Esophagus muscularis mucosa (tissue), 4 donors: ENCODE measurements at regions of chr2 and their contacts with region 1.

Region 1: GRCh38 chr2:215917953-215918620 is 95.3 kb downstream of the MREG start:
- DNase-seq: no peak
- H3K4me3 ChIP-seq: no peak overlapping the region
- H3K27ac ChIP-seq: peak overlapping the region; percentile 36 to 61 (median 57)
- H3K4me1 ChIP-seq: peaks cover 5 to 32% (median 28%) of the 10 kb centered on the region in 4 donors
- H3K27me3 ChIP-seq: no peaks in the 10 kb centered on the region
- CTCF ChIP-seq: no peak
- EP300 ChIP-seq: no peak
- POLR2A ChIP-seq: no peak

Region 2: GRCh38 chr2:215454519-215455246 is 463.4 kb before region 1 on chr2:
- intact Hi-C with region 1: loop called (anchors 5 kb)
- DNase-seq: no peak
- H3K4me3 ChIP-seq: no peak overlapping the region
- H3K27ac ChIP-seq: no peak overlapping the region
- H3K4me1 ChIP-seq: peaks cover 0 to 10% (median 3%) of the 10 kb centered on the region in 4 donors
- H3K27me3 ChIP-seq: no peaks in the 10 kb centered on the region
- CTCF ChIP-seq: peak; percentile 70 to 81 (median 77)
- EP300 ChIP-seq: no peak
- POLR2A ChIP-seq: no peak

Region 3: GRCh38 chr2:215619022-215619958 is 298.8 kb before region 1 on chr2:
- intact Hi-C with region 1: loop called (anchors 10 kb)
- DNase-seq: no peak
- H3K4me3 ChIP-seq: peak overlapping the region in 3 of 4 donors; percentile 8 to 19 (median 16)
- H3K27ac ChIP-seq: peak overlapping the region in 3 of 4 donors; percentile 37 to 51 (median 38)
- H3K4me1 ChIP-seq: peaks cover 0 to 49% (median 45%) of the 10 kb centered on the region in 4 donors
- H3K27me3 ChIP-seq: no peaks in the 10 kb centered on the region
- CTCF ChIP-seq: no peak
- EP300 ChIP-seq: no peak
- POLR2A ChIP-seq: no peak